Activated B cell treated with CpG ODN at 0.5 μM for 24 hours (primary cell): ENCODE measurements at regions of chr15 and their contacts with region 1.

Region 1: DNA sequence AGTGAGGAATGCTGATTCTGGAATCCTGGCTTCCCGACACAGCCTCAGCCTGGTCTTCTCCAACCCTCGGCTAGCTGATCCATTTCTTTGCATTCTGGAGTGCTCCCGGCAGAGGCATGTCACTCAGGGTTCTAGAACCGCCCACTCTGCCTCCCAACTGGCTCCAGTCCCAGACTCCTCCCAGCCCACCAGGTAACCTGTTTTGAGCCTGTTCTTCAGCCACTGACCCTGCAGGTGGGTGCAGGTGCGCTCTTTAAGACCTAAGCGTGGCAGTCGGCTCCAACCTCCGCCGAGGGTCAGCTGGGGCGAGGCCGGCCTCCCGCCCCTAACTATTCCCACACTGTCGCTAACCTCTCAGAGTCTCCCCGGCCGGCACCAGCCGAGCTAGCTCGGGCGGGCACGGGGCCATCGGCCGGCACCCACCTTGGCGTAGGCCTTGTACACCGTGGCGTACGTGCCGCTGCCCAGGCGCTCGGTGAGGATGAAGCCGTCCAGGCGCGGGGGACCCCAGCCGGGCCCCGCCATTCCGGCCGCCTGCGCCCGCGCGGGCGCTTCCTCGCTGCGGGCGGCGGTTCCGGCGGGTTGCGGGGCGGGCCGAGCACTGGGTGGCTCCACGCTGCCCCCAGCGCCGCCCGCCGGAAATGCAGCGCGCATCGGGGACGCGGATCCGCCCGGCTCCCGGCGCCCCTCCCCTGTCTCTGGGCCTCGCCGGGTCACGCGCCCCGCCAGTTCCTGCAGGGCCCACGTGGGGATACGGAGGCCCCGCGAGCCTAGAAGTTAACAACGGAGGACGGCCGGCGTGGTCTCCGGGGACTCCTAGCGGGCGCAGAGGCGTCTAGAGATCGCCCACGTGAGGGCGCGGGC is at the start of gene ULK3:
- DNase-seq: peak; percentile 97
- ATAC-seq: peak; percentile 95
- H3K4me3 Mint-ChIP-seq: peak within 1 kb of the TSS; percentile 91
- H3K27ac Mint-ChIP-seq: peak within 1 kb of the TSS; percentile 77
- H3K4me1 Mint-ChIP-seq: peaks cover 48% of the 10 kb centered on the region
- H3K27me3 Mint-ChIP-seq: no peaks in the 10 kb centered on the region
- CTCF ChIP-seq: no peak
- total RNA-seq, gene ULK3: 43.6 and 52.1 TPM in 2 replicates

Region 2: GRCh38 chr15:74635228-74635627 is 207.6 kb before region 1 on chr15:
- CTCF ChIA-PET with region 1: interaction called, 3 read pairs
- POLR2A ChIA-PET with region 1: no interaction called
- intact Hi-C with region 1: loop called (anchors 2 kb)
- DNase-seq: peak; percentile 61
- ATAC-seq: peak; percentile 64
- H3K4me3 Mint-ChIP-seq: no peak overlapping the region
- H3K27ac Mint-ChIP-seq: no peak overlapping the region
- H3K4me1 Mint-ChIP-seq: peaks cover 18% of the 10 kb centered on the region
- H3K27me3 Mint-ChIP-seq: no peaks in the 10 kb centered on the region
- CTCF ChIP-seq: no peak

Region 3: GRCh38 chr15:74799856-74800547 is 42.8 kb before region 1 on chr15:
- CTCF ChIA-PET with region 1: no interaction called
- POLR2A ChIA-PET with region 1: interaction called, 6 read pairs
- intact Hi-C with region 1: loop called (anchors 2 kb)
- DNase-seq: peak; percentile 88
- ATAC-seq: peak; percentile 89
- H3K4me3 Mint-ChIP-seq: peak overlapping the region; percentile 41
- H3K27ac Mint-ChIP-seq: peak overlapping the region; percentile 89
- H3K4me1 Mint-ChIP-seq: peaks cover 64% of the 10 kb centered on the region
- H3K27me3 Mint-ChIP-seq: no peaks in the 10 kb centered on the region
- CTCF ChIP-seq: peak; percentile 67

Region 4: GRCh38 chr15:74857082-74857655 is 14.4 kb after region 1 on chr15:
- CTCF ChIA-PET with region 1: no interaction called
- POLR2A ChIA-PET with region 1: interaction called, 42 read pairs
- intact Hi-C with region 1: loop called (anchors 2 kb)
- DNase-seq: no peak
- ATAC-seq: peak; percentile 72
- H3K4me3 Mint-ChIP-seq: peak overlapping the region; percentile 44
- H3K27ac Mint-ChIP-seq: peak overlapping the region; percentile 83
- H3K4me1 Mint-ChIP-seq: peaks cover 52% of the 10 kb centered on the region
- H3K27me3 Mint-ChIP-seq: no peaks in the 10 kb centered on the region
- CTCF ChIP-seq: no peak

Region 5: GRCh38 chr15:74937596-74938296 is 94.9 kb after region 1 on chr15 and contains the start of gene COX5A:
- CTCF ChIA-PET with region 1: no interaction called
- POLR2A ChIA-PET with region 1: interaction called, 5 read pairs
- intact Hi-C with region 1: loop called (anchors 1 kb)
- DNase-seq: peak; percentile 86
- ATAC-seq: peak; percentile 97
- H3K4me3 Mint-ChIP-seq: peak within 1 kb of the TSS; percentile 86
- H3K27ac Mint-ChIP-seq: peak within 1 kb of the TSS; percentile 90
- H3K4me1 Mint-ChIP-seq: peaks cover 34% of the 10 kb centered on the region
- H3K27me3 Mint-ChIP-seq: no peaks in the 10 kb centered on the region
- CTCF ChIP-seq: no peak
- total RNA-seq, gene COX5A: 150 and 159 TPM in 2 replicates